ENCODE measurements at regions of chr9 and their contacts with region 1.

Region 1: GRCh38 chr9:114653556-114654159 is 3.9 kb downstream of the TEX53 start:
- DNase-seq: peak; percentile 57
- ATAC-seq: peak; percentile 95
- H3K4me3 ChIP-seq: no peak overlapping the region
- H3K27ac ChIP-seq: no peak overlapping the region
- H3K4me1 ChIP-seq: peaks cover 0 to 5% of the 10 kb centered on the region in 2 experiments; a peak in 2 of 4 replicates
- H3K27me3 ChIP-seq: no peaks in the 10 kb centered on the region
- CTCF ChIP-seq: peak; percentile 90 to 95 (median 90)
- POLR2A ChIP-seq: no peak
- RAD21 ChIP-seq: peak; percentile 97

Region 2: GRCh38 chr9:113541019-113541900 is 1112.4 kb before region 1 on chr9:
- CTCF ChIA-PET with region 1: no interaction called
- POLR2A ChIA-PET with region 1: no interaction called
- RAD21 ChIA-PET with region 1: no interaction called
- intact Hi-C with region 1: no loop called
- DNase-seq: peak; percentile 54
- ATAC-seq: peak; percentile 94
- H3K4me3 ChIP-seq: no peak overlapping the region
- H3K27ac ChIP-seq: 0 out of 2 replicates have a peak overlapping the region, but pooled peaks have one; percentile 27
- H3K4me1 ChIP-seq: peaks cover 2 to 10% of the 10 kb centered on the region in 2 experiments; a peak in 2 of 4 replicates
- H3K27me3 ChIP-seq: no peaks in the 10 kb centered on the region
- CTCF ChIP-seq: 0 out of 6 replicates have a peak, but pooled peaks of 1 of the 3 experiments have one; percentile 3
- POLR2A ChIP-seq: peak; percentile 36
- RAD21 ChIP-seq: no peak

Region 3: DNA sequence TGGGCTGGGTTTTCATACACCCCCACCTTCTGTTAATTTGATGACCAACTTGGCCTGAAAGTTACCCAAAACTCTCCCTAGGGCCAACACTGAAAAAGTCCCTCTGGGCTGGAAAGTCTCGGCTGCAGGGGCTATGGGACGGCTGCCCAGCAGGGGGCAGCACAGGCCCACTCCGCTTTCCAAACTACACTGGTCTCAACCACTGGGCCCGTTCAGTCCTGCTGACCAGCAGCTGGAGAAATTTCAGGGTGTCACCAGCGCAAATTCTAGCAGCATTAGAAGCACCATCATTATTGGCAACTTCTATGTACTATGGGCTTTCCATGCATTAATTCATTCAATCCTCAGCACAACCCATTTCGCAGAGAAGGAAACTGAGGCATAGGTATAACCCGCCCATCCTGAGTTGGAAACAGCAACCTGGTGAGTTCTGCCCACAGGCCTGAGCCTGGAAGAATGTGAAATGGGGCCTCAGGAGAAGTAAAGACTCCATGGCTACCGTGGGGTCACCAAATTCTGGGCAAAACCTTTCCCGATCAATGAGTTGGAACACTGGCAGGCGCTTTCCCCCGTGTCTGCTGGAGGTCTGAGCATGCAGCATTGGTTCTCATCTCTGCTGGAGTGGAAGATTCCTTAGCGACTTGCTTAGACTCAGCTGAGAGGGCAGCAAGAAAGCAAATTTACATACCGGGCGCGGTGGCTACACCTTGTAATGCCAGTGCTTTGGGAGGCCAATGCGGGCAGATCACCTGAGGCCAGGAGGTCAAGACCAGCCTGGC is 314.3 kb before region 1 on chr9:
- CTCF ChIA-PET with region 1: interaction called, 3 read pairs
- POLR2A ChIA-PET with region 1: no interaction called
- RAD21 ChIA-PET with region 1: no interaction called
- intact Hi-C with region 1: loop called (anchors 1 kb)
- DNase-seq: no peak
- ATAC-seq: peak; percentile 93
- H3K4me3 ChIP-seq: no peak overlapping the region
- H3K27ac ChIP-seq: no peak overlapping the region
- H3K4me1 ChIP-seq: no peaks in the 10 kb centered on the region
- H3K27me3 ChIP-seq: no peaks in the 10 kb centered on the region
- CTCF ChIP-seq: peak; percentile 42 to 96 (median 94); a peak in 5 of 6 replicates
- POLR2A ChIP-seq: no peak
- RAD21 ChIP-seq: peak; percentile 75

Region 4: GRCh38 chr9:114405294-114406034 is 248.2 kb before region 1 on chr9:
- CTCF ChIA-PET with region 1: interaction called, 71 read pairs
- POLR2A ChIA-PET with region 1: interaction called, 4 read pairs
- RAD21 ChIA-PET with region 1: interaction called, 14 to 15 read pairs
- intact Hi-C with region 1: loop called (anchors 1 kb)
- DNase-seq: peak; percentile 48
- ATAC-seq: peak; percentile 98
- H3K4me3 ChIP-seq: no peak overlapping the region
- H3K27ac ChIP-seq: no peak overlapping the region
- H3K4me1 ChIP-seq: no peaks in the 10 kb centered on the region
- H3K27me3 ChIP-seq: no peaks in the 10 kb centered on the region
- CTCF ChIP-seq: peak; percentile 78 to 81 (median 80)
- POLR2A ChIP-seq: no peak
- RAD21 ChIP-seq: peak; percentile 93

Region 5: GRCh38 chr9:114434878-114435311 is 218.8 kb before region 1 on chr9:
- CTCF ChIA-PET with region 1: interaction called, 48 read pairs
- POLR2A ChIA-PET with region 1: no interaction called
- RAD21 ChIA-PET with region 1: interaction called, 5 to 6 read pairs
- intact Hi-C with region 1: loop called (anchors 1 kb)
- DNase-seq: peak; percentile 35
- ATAC-seq: peak; percentile 93
- H3K4me3 ChIP-seq: no peak overlapping the region
- H3K27ac ChIP-seq: no peak overlapping the region
- H3K4me1 ChIP-seq: no peaks in the 10 kb centered on the region
- H3K27me3 ChIP-seq: no peaks in the 10 kb centered on the region
- CTCF ChIP-seq: peak; percentile 62 to 79 (median 70)
- POLR2A ChIP-seq: no peak
- RAD21 ChIP-seq: peak; percentile 88

Region 6: DNA sequence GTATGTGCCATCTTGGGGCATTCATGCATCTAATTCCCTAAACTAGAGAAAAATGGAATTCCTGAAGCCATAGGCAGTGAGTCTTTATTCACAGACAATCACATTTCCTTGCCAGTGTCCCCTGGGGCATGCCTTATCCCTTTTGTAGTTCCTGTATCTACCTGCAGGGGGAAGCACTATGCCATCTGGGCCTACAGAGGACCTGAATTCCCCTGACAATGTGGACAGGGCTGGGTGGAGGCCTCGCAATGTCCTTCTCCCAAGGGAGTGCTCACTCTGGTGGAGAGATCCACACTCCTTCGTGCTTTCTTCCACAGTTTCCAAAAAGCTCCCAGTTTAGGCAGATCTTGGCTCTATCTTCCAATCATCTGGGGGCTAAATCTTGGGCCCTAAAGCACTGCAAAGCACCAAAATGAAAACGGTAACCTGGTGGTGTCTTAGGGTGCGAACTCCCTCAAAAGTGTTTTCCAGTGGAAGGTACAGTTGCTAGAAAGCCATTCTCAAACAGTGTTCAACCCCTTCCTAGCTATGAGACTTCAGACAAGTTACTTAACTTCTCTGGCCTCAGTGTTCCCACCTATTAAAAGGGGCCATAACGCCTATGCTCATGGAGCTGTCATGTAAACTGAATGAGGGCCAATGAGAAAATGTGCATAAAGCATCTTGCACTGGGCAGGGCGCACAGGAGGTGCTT is 165.9 kb before region 1 on chr9:
- CTCF ChIA-PET with region 1: interaction called, 11 read pairs
- POLR2A ChIA-PET with region 1: interaction called, 3 read pairs
- RAD21 ChIA-PET with region 1: interaction called, 3 to 9 read pairs
- intact Hi-C with region 1: loop called (anchors 1 kb)
- DNase-seq: peak; percentile 57
- ATAC-seq: peak; percentile 88
- H3K4me3 ChIP-seq: no peak overlapping the region
- H3K27ac ChIP-seq: no peak overlapping the region
- H3K4me1 ChIP-seq: peaks cover 19 to 38% of the 10 kb centered on the region in 2 experiments
- H3K27me3 ChIP-seq: no peaks in the 10 kb centered on the region
- CTCF ChIP-seq: peak; percentile 76 to 90 (median 86); a peak in 5 of 6 replicates
- POLR2A ChIP-seq: no peak
- RAD21 ChIP-seq: peak; percentile 82

Region 7: GRCh38 chr9:114538241-114538640 is 115.4 kb before region 1 on chr9:
- CTCF ChIA-PET with region 1: interaction called, 18 read pairs
- POLR2A ChIA-PET with region 1: interaction called, 4 read pairs
- RAD21 ChIA-PET with region 1: interaction called, 5 to 6 read pairs
- intact Hi-C with region 1: no loop called
- DNase-seq: peak; percentile 88
- ATAC-seq: peak; percentile 100
- H3K4me3 ChIP-seq: no peak overlapping the region
- H3K27ac ChIP-seq: no peak overlapping the region
- H3K4me1 ChIP-seq: peaks cover 4 to 13% of the 10 kb centered on the region in 2 experiments; a peak in 3 of 4 replicates
- H3K27me3 ChIP-seq: no peaks in the 10 kb centered on the region
- CTCF ChIP-seq: peak; percentile 26 to 55 (median 54); a peak in 4 of 6 replicates
- POLR2A ChIP-seq: peak; percentile 38
- RAD21 ChIP-seq: peak; percentile 74

Region 8: GRCh38 chr9:114681594-114682332 is 28.1 kb after region 1 on chr9 and contains the start of gene TEX48:
- CTCF ChIA-PET with region 1: interaction called, 10 read pairs
- POLR2A ChIA-PET with region 1: no interaction called
- RAD21 ChIA-PET with region 1: no interaction called
- intact Hi-C with region 1: no loop called
- DNase-seq: peak; percentile 78
- ATAC-seq: peak; percentile 93
- H3K4me3 ChIP-seq: no peak within 1 kb of the TSS
- H3K27ac ChIP-seq: no peak within 1 kb of the TSS
- H3K4me1 ChIP-seq: peaks cover 13 to 22% of the 10 kb centered on the region in 2 experiments; a peak in 3 of 4 replicates
- H3K27me3 ChIP-seq: no peaks in the 10 kb centered on the region
- CTCF ChIP-seq: peak; percentile 79 to 90 (median 83)
- POLR2A ChIP-seq: no peak
- RAD21 ChIP-seq: peak; percentile 91
- total RNA-seq, gene TEX48: not detected